PC-9 (cell line): ENCODE measurements at regions of chrX and their contacts with region 1.

Region 1: GRCh38 chrX:3651276-3651675 is 62.2 kb downstream of the PRKX start:
- DNase-seq: no peak
- H3K4me3 ChIP-seq: no peak overlapping the region
- H3K27ac ChIP-seq: no peak overlapping the region
- H3K4me1 ChIP-seq: no peaks in the 10 kb centered on the region
- H3K27me3 ChIP-seq: no peaks in the 10 kb centered on the region
- CTCF ChIP-seq: peak; percentile 85

Region 2: DNA sequence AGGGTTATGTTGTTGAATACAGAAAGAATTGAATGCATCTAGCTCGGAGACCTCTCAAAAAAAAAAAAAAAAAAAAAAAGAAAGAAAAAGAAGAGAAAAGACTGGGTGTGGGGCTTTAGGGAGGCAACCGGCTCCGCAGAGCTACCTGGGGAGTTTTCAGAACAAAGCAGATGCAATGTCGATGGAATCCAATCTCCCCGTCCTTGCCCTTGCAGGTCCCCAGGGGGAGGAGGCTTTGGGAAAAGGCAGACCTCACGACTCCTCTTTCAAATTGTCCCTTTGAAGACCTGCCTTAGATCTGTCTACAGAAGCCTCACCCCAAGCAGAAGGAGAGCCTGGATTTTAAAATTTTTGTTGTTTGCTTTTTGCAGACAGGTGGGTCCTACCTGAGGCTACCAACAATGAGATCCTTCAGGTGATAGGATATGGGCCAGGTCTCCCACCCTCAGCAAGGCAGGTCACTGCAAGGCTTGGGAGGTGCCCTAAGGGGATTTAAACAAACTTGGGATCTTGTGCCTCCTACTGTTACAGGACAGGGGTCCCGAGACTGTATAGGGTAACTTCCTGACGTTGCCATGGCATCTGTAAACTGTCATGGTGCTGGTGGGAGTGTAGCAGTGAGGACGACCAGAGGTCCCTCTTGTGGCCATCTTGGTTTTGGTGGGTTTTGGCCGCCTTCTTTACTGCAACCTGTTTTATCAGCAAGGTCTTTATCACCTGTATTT is 137.4 kb after region 1 on chrX:
- CTCF ChIA-PET with region 1: no interaction called
- POLR2A ChIA-PET with region 1: no interaction called
- intact Hi-C with region 1: loop called (anchors 10 kb)
- DNase-seq: no peak
- H3K4me3 ChIP-seq: no peak overlapping the region
- H3K27ac ChIP-seq: no peak overlapping the region
- H3K4me1 ChIP-seq: no peaks in the 10 kb centered on the region
- H3K27me3 ChIP-seq: peaks cover 70% of the 10 kb centered on the region
- CTCF ChIP-seq: no peak

Region 3: GRCh38 chrX:3811331-3812311 is 160.3 kb after region 1 on chrX:
- CTCF ChIA-PET with region 1: no interaction called
- POLR2A ChIA-PET with region 1: no interaction called
- intact Hi-C with region 1: loop called (anchors 1 kb)
- DNase-seq: peak in 1 of 2 experiments; percentile 32
- H3K4me3 ChIP-seq: no peak overlapping the region
- H3K27ac ChIP-seq: no peak overlapping the region
- H3K4me1 ChIP-seq: peaks cover 9% of the 10 kb centered on the region
- H3K27me3 ChIP-seq: peaks cover 12% of the 10 kb centered on the region
- CTCF ChIP-seq: peak; percentile 63